PC-9 (cell line): ENCODE measurements at regions of chr12 and their contacts with region 1.

Region 1: GRCh38 chr12:44947163-44947562 is 71.0 kb upstream of the NELL2 start:
- DNase-seq: no peak
- H3K4me3 ChIP-seq: no peak overlapping the region
- H3K27ac ChIP-seq: no peak overlapping the region
- H3K4me1 ChIP-seq: 0 out of 2 replicates have a peak, but pooled peaks cover 4% of the 10 kb centered on the region
- H3K27me3 ChIP-seq: no peaks in the 10 kb centered on the region
- CTCF ChIP-seq: no peak

Region 2: GRCh38 chr12:45050751-45051571 is 103.8 kb after region 1 on chr12 and contains the start of gene DBX2:
- CTCF ChIA-PET with region 1: no interaction called
- POLR2A ChIA-PET with region 1: no interaction called
- intact Hi-C with region 1: no loop called
- DNase-seq: peak in 1 of 2 experiments; percentile 3
- H3K4me3 ChIP-seq: peak within 1 kb of the TSS; percentile 41; the same call in 1 of the 2 replicates
- H3K27ac ChIP-seq: no peak within 1 kb of the TSS
- H3K4me1 ChIP-seq: no peaks in the 10 kb centered on the region
- H3K27me3 ChIP-seq: no peaks in the 10 kb centered on the region
- CTCF ChIP-seq: no peak
- total RNA-seq, gene DBX2: not detected in 2 replicates

Region 3: GRCh38 chr12:45122768-45123380 is 175.7 kb after region 1 on chr12:
- CTCF ChIA-PET with region 1: no interaction called
- POLR2A ChIA-PET with region 1: no interaction called
- intact Hi-C with region 1: loop called (anchors 2 kb)
- DNase-seq: no peak
- H3K4me3 ChIP-seq: no peak overlapping the region
- H3K27ac ChIP-seq: no peak overlapping the region
- H3K4me1 ChIP-seq: no peaks in the 10 kb centered on the region
- H3K27me3 ChIP-seq: no peaks in the 10 kb centered on the region
- CTCF ChIP-seq: peak; percentile 50; the same call in 1 of the 2 replicates